ENCODE measurements at regions of chr16 and their contacts with region 1.

Region 1: GRCh38 chr16:86575754-86576557 is 2.4 kb upstream of the FOXL1 start:
- DNase-seq: peak; percentile 87
- H3K4me3 Mint-ChIP-seq: peak overlapping the region; percentile 70
- H3K27ac Mint-ChIP-seq: no peak overlapping the region
- H3K4me1 Mint-ChIP-seq: peaks cover 7% of the 10 kb centered on the region
- H3K27me3 Mint-ChIP-seq: peaks cover 68% of the 10 kb centered on the region

Region 2: DNA sequence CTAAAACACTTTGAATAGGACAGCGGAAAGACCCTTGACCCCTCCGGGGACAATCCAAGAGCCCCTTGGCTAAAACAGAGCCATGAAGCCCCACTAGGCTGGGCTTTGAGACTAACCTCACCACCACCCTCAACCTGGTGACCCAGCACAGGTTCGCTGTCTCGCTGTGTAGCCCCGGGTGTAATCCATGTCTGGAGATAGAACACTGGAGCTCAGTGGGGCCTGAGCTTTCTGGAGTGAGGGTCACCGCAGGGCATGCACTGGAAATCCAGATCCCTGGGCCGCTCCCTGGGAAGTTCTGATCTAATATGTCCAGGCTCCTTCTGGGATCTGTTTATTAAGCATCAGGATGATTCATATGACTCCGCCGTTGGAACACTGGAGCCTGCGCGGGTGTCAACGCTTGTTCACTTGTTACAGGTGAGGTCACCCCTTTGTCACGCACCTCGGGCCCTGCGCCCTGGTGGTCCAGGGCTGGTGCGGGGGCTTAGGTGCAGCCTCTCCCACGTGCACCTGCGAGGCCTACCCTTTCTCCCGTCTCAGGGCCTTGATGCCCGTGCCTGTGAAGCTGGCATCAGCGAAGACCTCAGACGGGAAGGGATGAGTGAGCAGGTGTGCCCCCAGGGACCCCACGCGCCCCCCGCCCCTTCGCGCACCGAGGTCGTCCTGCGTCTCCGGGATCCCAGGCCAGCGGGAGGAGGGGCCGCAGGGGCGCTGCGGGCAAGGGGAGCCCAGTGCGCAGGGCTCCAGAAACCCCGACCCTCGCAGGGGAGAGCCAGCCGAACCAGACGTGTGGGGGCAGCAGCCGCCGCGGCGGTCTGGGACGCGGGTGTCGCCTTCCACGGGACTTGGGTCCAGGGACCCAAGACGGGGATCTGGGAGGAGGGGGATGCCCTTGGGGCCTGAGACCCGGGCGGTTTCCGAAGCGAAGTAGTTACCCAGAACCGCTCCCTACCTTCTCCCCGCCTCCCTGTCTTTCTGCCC is 289.7 kb before region 1 on chr16:
- intact Hi-C with region 1: no loop called
- DNase-seq: no peak
- H3K4me3 Mint-ChIP-seq: no peak overlapping the region
- H3K27ac Mint-ChIP-seq: no peak overlapping the region
- H3K4me1 Mint-ChIP-seq: no peaks in the 10 kb centered on the region
- H3K27me3 Mint-ChIP-seq: peaks cover 60% of the 10 kb centered on the region

Region 3: DNA sequence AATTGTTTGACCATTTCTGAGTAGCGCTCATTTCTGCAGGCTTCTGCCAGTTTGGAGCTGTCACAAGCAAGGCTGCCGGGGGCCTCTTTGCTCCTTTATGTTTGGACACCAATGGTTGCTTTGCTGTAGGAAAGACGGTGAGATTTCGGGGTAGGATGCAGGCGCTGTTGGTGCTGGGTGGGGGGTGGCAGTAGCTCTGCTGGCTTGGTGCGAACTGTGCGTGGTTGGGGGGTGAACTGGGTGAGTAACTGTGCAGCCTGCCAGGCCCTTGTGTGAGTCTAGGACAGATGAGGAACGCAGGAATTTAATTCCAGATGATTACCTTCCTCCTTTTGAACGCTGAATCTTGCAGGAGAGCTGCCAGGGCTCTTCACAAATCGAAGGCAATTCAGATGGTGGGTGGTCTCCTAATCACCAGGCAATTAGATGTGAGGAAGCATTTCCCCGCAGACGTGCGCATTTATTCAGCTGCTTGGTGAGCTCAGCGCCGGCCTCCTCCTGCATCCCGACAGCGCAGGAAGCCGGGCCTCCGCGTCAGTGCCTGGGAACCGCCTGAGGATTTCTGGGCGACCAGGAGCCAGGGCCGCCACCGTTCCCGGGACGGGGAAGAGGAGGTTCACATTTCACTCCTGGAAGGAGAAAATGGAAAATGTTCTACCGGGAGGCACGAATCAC is 156.8 kb after region 1 on chr16:
- intact Hi-C with region 1: loop called (anchors 10 kb)
- DNase-seq: no peak
- H3K4me3 Mint-ChIP-seq: no peak overlapping the region
- H3K27ac Mint-ChIP-seq: no peak overlapping the region
- H3K4me1 Mint-ChIP-seq: no peaks in the 10 kb centered on the region
- H3K27me3 Mint-ChIP-seq: peaks cover 52% of the 10 kb centered on the region

Measured in activated CD4-positive, alpha-beta T cell treated with anti-CD3 and anti-CD28 coated beads, Interleukin-2, amount 10 ng/mL, durations not matched to agents 24 days and 14 days (primary cell).